ENCODE measurements at regions of chr11 and their contacts with region 1.

Region 1: DNA sequence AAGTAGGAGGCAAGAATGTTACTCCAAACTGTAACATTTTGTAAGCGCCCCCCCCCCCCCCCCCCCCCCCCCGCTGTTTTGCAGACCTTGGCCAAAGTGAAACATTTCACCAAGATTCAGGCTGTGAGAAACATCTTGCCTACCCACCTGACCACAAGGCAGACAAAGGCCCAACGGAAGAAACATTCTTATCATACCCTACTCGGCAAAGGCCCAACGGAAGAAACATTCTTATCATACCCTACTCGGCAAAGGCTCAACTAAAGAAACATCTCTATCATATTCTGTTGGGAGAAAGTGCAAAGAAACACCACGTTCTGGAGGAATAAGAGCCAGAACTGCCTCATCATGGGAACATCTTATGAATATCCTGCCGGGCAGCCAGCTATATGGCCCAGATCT is 117.1 kb downstream of the JRKL start:
- DNase-seq: peak; percentile 24 to 81 (median 37)
- ATAC-seq: peak; percentile 69
- H3K4me3 ChIP-seq: peak overlapping the region; percentile 24
- H3K27ac ChIP-seq: peak overlapping the region; percentile 93
- H3K4me1 ChIP-seq: peaks cover 4 to 25% of the 10 kb centered on the region in 2 experiments; a peak in 4 of 5 replicates
- H3K27me3 ChIP-seq: no peaks in the 10 kb centered on the region
- CTCF ChIP-seq: no peak
- EP300 ChIP-seq: peak; percentile 92
- POLR2A ChIP-seq: peak; percentile 63; the same call in 1 of the 2 replicates
- RAD21 ChIP-seq: no peak

Region 2: GRCh38 chr11:96486894-96487595 is 19.9 kb before region 1 on chr11:
- CTCF ChIA-PET with region 1: no interaction called
- POLR2A ChIA-PET with region 1: interaction called, 6 read pairs
- in situ Hi-C with region 1: no loop called
- intact Hi-C with region 1: loop called (anchors 2 kb)
- DNase-seq: peak in 1 of 4 experiments; percentile 85
- ATAC-seq: peak; percentile 91
- H3K4me3 ChIP-seq: peak overlapping the region; percentile 34
- H3K27ac ChIP-seq: peak overlapping the region; percentile 74
- H3K4me1 ChIP-seq: peaks cover 0 to 28% of the 10 kb centered on the region in 2 experiments; a peak in 4 of 5 replicates
- H3K27me3 ChIP-seq: no peaks in the 10 kb centered on the region
- CTCF ChIP-seq: no peak
- EP300 ChIP-seq: no peak
- POLR2A ChIP-seq: peak; percentile 51
- RAD21 ChIP-seq: no peak

Region 3: DNA sequence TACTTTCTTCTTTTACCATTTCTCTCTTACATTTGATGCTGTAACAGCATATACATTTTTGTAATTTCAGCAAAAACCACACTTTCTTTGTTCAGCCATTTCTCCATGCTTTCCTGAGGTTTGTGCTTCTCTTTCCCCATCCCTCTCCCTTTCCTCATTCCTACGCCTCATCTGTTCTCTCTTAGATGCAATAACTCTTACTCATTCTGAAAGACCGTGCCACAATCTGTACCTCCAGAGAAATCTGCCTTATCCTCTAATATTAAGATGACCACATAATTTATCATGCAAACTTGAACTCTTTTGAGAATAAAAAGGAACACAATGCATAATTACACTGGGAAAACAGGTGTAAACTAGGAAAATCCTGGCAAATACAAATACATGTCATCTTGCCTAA is 471.8 kb after region 1 on chr11:
- CTCF ChIA-PET with region 1: no interaction called
- POLR2A ChIA-PET with region 1: no interaction called
- in situ Hi-C with region 1: no loop called
- intact Hi-C with region 1: no loop called
- DNase-seq: no peak
- ATAC-seq: no peak
- H3K4me3 ChIP-seq: no peak overlapping the region
- H3K27ac ChIP-seq: no peak overlapping the region
- H3K4me1 ChIP-seq: no peaks in the 10 kb centered on the region
- H3K27me3 ChIP-seq: no peaks in the 10 kb centered on the region
- CTCF ChIP-seq: no peak
- EP300 ChIP-seq: no peak
- POLR2A ChIP-seq: no peak
- RAD21 ChIP-seq: no peak